Activated CD8-positive, alpha-beta T cell treated with anti-CD3 and anti-CD28 coated beads, Interleukin-2, amount 10 ng/mL, durations not matched to agents 7 days and 5 days (primary cell): ENCODE measurements at regions of chr1 and their contacts with region 1.

Region 1: DNA sequence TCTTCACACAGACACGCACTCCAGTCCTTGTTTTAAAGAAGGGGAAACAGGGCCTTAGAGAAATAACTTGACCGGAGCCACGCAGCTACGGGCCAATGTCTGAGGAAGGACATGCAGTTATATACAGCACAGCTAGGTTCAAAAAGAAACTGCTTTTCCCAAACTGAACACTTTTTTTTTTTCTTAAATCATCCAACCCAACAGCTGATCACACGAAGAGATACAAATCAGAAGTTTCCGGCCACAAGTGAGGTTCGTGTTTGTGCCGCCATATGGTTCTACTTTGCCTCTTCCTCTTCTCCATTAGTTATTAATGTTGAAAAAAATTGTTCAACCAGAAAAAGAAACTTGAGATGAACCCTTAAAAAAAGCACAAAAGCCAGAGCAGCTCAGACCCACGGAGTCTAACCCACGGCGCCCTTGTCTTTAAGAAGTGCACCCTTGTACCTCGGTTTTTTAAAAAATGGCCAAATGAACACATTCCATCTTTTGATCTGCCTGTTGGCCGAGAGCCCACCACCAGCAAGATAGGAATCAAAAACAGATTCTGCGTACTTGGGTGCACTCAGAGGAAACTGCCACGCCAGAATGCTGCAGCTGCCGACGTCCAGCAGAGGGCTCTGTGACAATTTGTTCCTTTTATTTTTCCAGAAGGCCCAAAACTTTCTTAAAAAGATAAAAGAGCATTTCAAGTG is 78.9 kb downstream of the SLC66A1 start:
- DNase-seq: peak; percentile 79
- ATAC-seq: peak; percentile 77
- H3K4me3 Mint-ChIP-seq: peak overlapping the region; percentile 79
- H3K27ac Mint-ChIP-seq: peak overlapping the region; percentile 95
- H3K4me1 Mint-ChIP-seq: peaks cover 76% of the 10 kb centered on the region
- H3K27me3 Mint-ChIP-seq: no peaks in the 10 kb centered on the region

Region 2: GRCh38 chr1:19405761-19406487 is 14.9 kb after region 1 on chr1:
- CTCF ChIA-PET with region 1: interaction called, 11 read pairs
- POLR2A ChIA-PET with region 1: interaction called, 4 read pairs
- DNase-seq: peak; percentile 27
- ATAC-seq: peak; percentile 40
- H3K4me3 Mint-ChIP-seq: no peak overlapping the region
- H3K27ac Mint-ChIP-seq: peak overlapping the region; percentile 39
- H3K4me1 Mint-ChIP-seq: peaks cover 32% of the 10 kb centered on the region
- H3K27me3 Mint-ChIP-seq: no peaks in the 10 kb centered on the region